Activated CD8-positive, alpha-beta T cell treated with anti-CD3 and anti-CD28 coated beads for 36 hours (primary cell): ENCODE measurements at regions of chr7 and their contacts with region 1.

Region 1: GRCh38 chr7:143240291-143241168 is 18.7 kb downstream of the TAS2R40 start:
- DNase-seq: peak; percentile 84
- ATAC-seq: peak; percentile 82
- H3K4me3 Mint-ChIP-seq: peak overlapping the region; percentile 16
- H3K27ac Mint-ChIP-seq: peak overlapping the region; percentile 49
- H3K4me1 Mint-ChIP-seq: peaks cover 33% of the 10 kb centered on the region
- H3K27me3 Mint-ChIP-seq: no peaks in the 10 kb centered on the region
- CTCF ChIP-seq: peak; percentile 95

Region 2: DNA sequence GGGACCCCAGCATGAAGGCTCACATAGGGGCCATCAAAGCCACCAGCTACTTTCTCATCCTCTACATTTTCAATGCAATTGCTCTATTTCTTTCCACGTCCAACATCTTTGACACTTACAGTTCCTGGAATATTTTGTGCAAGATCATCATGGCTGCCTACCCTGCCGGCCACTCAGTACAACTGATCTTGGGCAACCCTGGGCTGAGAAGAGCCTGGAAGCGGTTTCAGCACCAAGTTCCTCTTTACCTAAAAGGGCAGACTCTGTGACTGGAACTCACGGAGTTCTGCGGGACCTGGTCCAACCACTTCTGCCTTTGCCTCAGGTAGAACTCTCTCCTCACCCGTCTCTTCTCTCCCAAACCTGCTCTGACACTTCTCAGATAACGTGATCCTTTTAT is 17.7 kb before region 1 on chr7:
- CTCF ChIA-PET with region 1: interaction called, 23 read pairs
- POLR2A ChIA-PET with region 1: no interaction called
- intact Hi-C with region 1: no loop called
- DNase-seq: no peak
- ATAC-seq: no peak
- H3K4me3 Mint-ChIP-seq: no peak overlapping the region
- H3K27ac Mint-ChIP-seq: no peak overlapping the region
- H3K4me1 Mint-ChIP-seq: no peaks in the 10 kb centered on the region
- H3K27me3 Mint-ChIP-seq: peaks cover 6% of the 10 kb centered on the region
- CTCF ChIP-seq: no peak

Region 3: GRCh38 chr7:143263266-143264195 is 23.0 kb after region 1 on chr7 and contains the start of gene GSTK1:
- CTCF ChIA-PET with region 1: interaction called, 48 read pairs
- POLR2A ChIA-PET with region 1: interaction called, 5 read pairs
- intact Hi-C with region 1: no loop called
- DNase-seq: peak; percentile 86
- ATAC-seq: peak; percentile 96
- H3K4me3 Mint-ChIP-seq: peak within 1 kb of the TSS; percentile 90
- H3K27ac Mint-ChIP-seq: peak within 1 kb of the TSS; percentile 97
- H3K4me1 Mint-ChIP-seq: peaks cover 52% of the 10 kb centered on the region
- H3K27me3 Mint-ChIP-seq: no peaks in the 10 kb centered on the region
- CTCF ChIP-seq: no peak
- total RNA-seq, gene GSTK1: 163 to 171 TPM

Region 4: DNA sequence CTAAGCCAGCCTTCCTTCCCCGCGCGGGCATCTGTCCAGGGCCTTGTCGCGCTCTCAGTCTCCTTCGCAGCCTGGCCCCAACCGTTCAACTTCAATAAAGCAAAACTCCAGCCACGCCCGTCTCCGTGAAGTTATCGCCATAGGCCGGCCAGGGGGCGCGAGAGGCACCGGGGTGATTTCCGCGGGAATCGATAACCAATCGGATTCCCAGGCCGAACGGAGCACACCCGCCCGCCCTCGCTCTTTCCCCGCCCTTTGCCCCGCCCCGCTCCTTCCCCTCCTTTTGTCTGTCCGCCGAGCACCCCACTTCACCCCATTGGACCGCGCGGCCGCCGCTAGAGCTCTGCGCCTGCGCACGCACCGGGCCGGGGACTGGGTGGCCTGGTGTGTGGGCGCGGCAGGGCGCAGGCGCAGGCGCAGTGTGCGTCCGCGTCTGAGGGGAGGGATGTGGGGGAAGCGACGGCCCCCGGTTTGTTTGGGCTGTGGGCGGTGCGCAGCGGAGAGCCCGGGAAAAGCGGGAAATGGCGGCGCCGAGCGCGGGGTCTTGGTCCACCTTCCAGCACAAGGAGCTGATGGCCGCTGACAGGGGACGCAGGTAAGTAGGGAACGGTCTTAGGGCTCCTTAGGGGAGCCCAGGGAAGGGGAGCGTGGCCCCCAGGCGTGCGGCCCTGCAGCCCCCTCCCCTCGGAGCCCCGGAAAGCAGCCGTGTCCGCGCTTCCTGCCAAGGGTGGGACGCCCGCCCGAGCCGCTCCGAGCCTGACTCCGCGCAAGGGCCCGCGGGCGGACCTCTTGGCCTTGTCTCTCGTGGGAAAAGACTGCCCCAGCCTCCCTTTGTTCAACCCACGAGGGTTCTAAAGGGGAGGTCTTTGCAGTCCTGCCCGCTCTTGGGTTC is 47.7 kb after region 1 on chr7 and contains the start of gene CASP2:
- CTCF ChIA-PET with region 1: interaction called, 211 read pairs
- POLR2A ChIA-PET with region 1: interaction called, 3 read pairs
- intact Hi-C with region 1: loop called (anchors 2 kb)
- DNase-seq: peak; percentile 98
- ATAC-seq: peak; percentile 96
- H3K4me3 Mint-ChIP-seq: peak within 1 kb of the TSS; percentile 88
- H3K27ac Mint-ChIP-seq: peak within 1 kb of the TSS; percentile 89
- H3K4me1 Mint-ChIP-seq: peaks cover 42% of the 10 kb centered on the region
- H3K27me3 Mint-ChIP-seq: no peaks in the 10 kb centered on the region
- CTCF ChIP-seq: no peak
- total RNA-seq, gene CASP2: 79.6 to 80.9 TPM

Region 5: GRCh38 chr7:143334244-143334643 is 93.7 kb after region 1 on chr7:
- CTCF ChIA-PET with region 1: interaction called, 17 read pairs
- POLR2A ChIA-PET with region 1: no interaction called
- intact Hi-C with region 1: no loop called
- DNase-seq: no peak
- ATAC-seq: no peak
- H3K4me3 Mint-ChIP-seq: no peak overlapping the region
- H3K27ac Mint-ChIP-seq: no peak overlapping the region
- H3K4me1 Mint-ChIP-seq: no peaks in the 10 kb centered on the region
- H3K27me3 Mint-ChIP-seq: peaks cover 3% of the 10 kb centered on the region
- CTCF ChIP-seq: no peak

Region 6: DNA sequence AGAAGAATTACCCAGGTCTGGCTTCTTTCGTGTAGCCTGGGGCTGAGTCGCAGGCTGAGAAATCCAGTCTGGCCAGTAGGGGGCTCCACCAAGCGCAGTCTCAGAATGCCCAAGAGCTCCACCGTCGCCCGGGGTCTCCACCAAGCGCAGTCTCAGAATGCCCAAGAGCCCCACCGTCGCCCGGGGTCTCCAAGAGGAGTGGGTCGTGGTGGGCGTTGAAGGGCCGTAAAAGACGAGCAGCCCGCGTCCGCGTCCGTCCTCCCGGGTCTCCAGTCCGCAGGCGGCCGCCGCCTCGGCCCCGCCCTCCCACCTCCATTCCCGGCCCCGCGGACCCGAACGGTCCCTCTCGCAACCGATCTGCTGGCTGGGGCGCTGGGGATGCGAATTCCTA is 139.7 kb after region 1 on chr7:
- CTCF ChIA-PET with region 1: interaction called, 20 read pairs
- POLR2A ChIA-PET with region 1: interaction called, 3 read pairs
- intact Hi-C with region 1: no loop called
- DNase-seq: peak; percentile 94
- ATAC-seq: peak; percentile 45
- H3K4me3 Mint-ChIP-seq: peak overlapping the region; percentile 85
- H3K27ac Mint-ChIP-seq: peak overlapping the region; percentile 88
- H3K4me1 Mint-ChIP-seq: peaks cover 36% of the 10 kb centered on the region
- H3K27me3 Mint-ChIP-seq: no peaks in the 10 kb centered on the region
- CTCF ChIP-seq: peak; percentile 90

Region 7: DNA sequence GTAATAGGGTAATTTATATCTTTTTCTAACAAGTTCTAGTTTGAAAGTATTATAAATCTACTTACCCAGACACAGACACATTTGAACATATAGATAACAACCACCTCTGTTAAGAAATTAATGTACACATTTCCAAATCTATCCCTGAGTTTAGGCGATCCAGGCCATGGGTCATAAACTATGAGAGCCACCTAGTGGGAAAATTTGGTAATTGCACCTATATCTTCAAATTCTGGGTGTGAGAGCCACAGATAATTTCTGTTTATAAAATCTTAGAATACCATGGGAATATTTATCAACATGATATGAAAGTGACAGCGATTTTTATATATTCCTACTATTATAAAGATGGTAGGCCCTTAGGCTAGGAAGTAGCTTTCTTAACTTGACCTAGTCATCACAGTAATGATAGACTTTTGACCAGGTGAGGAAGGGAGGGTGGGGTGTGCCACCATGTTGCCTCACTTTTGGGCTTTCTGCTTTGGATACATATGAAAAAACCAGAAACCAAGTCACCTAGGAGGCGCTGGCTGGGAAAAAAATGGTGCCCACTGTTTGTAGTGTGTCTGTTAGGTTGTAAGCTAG is 176.1 kb after region 1 on chr7:
- CTCF ChIA-PET with region 1: interaction called, 79 read pairs
- POLR2A ChIA-PET with region 1: no interaction called
- intact Hi-C with region 1: loop called (anchors 2 kb)
- DNase-seq: no peak
- ATAC-seq: peak; percentile 60
- H3K4me3 Mint-ChIP-seq: no peak overlapping the region
- H3K27ac Mint-ChIP-seq: no peak overlapping the region
- H3K4me1 Mint-ChIP-seq: peaks cover 10% of the 10 kb centered on the region
- H3K27me3 Mint-ChIP-seq: no peaks in the 10 kb centered on the region
- CTCF ChIP-seq: peak; percentile 87